CD14-positive monocyte (primary cell): ENCODE measurements at regions of chr15 and their contacts with region 1.

Region 1: DNA sequence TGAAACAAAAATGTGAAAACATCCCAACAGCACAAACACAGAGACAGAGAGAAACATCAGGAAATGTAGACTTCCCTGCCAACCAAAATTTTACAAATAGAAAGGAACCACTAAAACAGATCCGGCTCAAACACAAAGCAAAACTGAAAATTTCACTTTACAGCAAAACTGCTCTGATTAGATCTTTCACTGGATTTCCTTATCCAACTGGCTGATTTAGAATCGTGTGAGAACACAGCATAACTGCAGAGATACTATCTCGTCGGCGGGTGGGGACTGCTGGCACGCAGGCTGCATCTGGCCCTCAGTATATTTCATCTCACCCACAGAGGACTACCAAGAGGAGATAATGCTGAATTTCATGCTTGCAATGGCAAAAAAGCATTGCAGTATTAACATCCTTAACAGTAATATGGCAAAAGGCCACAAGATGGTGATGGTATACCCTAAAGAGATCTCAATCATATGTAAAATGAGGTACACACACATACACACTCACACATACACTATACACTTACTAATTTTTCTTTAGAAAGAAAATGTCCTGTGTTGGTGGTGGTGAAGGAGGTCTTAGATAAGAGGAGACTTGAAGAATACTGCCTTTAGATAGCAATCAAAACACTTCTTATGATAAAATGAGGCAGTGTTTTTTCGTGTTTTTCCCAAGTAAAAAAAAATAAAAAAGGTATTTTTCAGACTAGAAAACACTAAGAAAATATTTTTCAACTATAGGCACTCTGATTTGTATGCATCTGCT is 10.6 kb upstream of the LEO1 start:
- DNase-seq: peak; percentile 48 to 79 (median 68)
- H3K4me3 ChIP-seq: peak overlapping the region; percentile 13 to 64 (median 43)
- H3K4me3 Mint-ChIP-seq: peak overlapping the region; percentile 76 to 87
- H3K27ac ChIP-seq: peak overlapping the region in 1 of 2 donors; percentile 38
- H3K27ac Mint-ChIP-seq: peak overlapping the region; percentile 40 to 78 (median 61)
- H3K4me1 ChIP-seq: peaks cover 10 to 22% of the 10 kb centered on the region in 2 donors
- H3K4me1 Mint-ChIP-seq: peaks cover 15% of the 10 kb centered on the region
- H3K27me3 ChIP-seq: no peaks in the 10 kb centered on the region
- H3K27me3 Mint-ChIP-seq: peaks cover 0 to 2% (median 2%) of the 10 kb centered on the region in 3 donors
- CTCF ChIP-seq: peak; percentile 82

Region 2: DNA sequence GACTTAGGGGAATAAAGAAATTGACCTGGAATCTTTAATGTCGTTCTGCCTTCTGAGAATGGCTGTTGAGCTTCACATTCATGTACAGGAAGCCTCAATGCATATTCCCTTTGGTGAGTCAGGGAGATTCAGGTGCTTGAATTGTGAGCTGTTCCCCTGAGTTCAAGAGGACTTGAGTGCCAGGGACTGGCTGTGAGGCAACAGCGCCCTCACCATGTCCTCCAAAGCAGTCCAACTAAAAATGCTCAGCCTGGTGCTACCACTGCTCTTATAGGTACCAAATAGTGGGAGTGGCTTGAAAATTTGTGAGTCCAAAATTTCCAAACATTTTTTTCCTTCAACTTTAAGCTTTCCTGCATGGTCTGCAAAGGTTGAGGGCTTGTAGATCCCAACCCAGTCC is 64.7 kb before region 1 on chr15:
- intact Hi-C with region 1: no loop called
- DNase-seq: no peak
- H3K4me3 ChIP-seq: no peak overlapping the region
- H3K4me3 Mint-ChIP-seq: no peak overlapping the region
- H3K27ac ChIP-seq: no peak overlapping the region
- H3K27ac Mint-ChIP-seq: no peak overlapping the region
- H3K4me1 ChIP-seq: no peaks in the 10 kb centered on the region
- H3K4me1 Mint-ChIP-seq: no peaks in the 10 kb centered on the region
- H3K27me3 ChIP-seq: no peaks in the 10 kb centered on the region
- H3K27me3 Mint-ChIP-seq: no peaks in the 10 kb centered on the region
- CTCF ChIP-seq: no peak

Region 3: DNA sequence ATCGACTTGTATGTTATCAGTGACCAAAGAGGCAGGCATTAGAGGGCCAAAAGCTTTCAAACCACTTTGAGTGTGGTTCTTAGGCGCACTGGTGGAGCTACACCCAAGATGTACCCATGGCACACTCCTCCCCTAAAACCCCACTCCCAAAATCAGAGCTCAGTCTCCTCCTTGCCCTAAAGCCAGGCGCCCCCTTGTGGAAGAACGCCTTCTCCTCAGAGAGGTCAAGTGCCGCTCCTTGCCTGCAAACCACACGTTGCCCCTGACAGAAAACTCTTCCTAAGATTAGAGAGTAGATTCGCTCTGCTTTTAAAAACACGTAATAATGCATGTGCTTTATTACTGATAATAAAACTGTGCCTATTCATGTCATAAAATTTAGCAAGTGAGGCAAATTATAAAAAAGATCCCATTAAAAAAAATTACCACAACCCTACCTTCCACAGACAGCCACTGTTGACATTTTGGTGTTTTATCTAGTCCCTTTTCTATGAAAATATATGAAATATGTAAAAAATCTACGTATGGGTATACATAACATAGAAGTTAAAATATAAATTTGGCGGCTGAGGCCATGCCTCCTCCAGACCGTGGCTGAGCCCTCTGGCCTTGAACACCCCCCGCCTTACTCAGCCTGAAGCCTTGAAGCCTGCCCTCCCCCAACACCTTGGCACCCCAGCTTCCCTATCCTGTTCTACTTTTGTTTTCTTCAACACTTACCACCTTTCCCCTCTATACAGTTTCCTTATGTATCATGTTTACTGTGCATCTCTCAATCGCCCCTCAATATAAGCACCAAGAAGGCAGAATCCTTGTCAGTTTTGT is 96.9 kb after region 1 on chr15:
- intact Hi-C with region 1: loop called (anchors 5 kb)
- DNase-seq: peak; percentile 60 to 78 (median 73)
- H3K4me3 ChIP-seq: no peak overlapping the region
- H3K4me3 Mint-ChIP-seq: no peak overlapping the region
- H3K27ac ChIP-seq: no peak overlapping the region
- H3K27ac Mint-ChIP-seq: peak overlapping the region in 1 of 7 donors; percentile 34
- H3K4me1 ChIP-seq: peaks cover 20 to 27% of the 10 kb centered on the region in 2 donors
- H3K4me1 Mint-ChIP-seq: peaks cover 40% of the 10 kb centered on the region
- H3K27me3 ChIP-seq: no peaks in the 10 kb centered on the region
- H3K27me3 Mint-ChIP-seq: peaks cover 0 to 5% (median 0%) of the 10 kb centered on the region in 3 donors
- CTCF ChIP-seq: peak; percentile 97